ENCODE measurements at regions of chr5 and their contacts with region 1.

Region 1: GRCh38 chr5:140639148-140639979 is at the start of gene TMCO6:
- DNase-seq: peak; percentile 99
- H3K4me3 Mint-ChIP-seq: peak within 1 kb of the TSS; percentile 82
- H3K27ac Mint-ChIP-seq: peak within 1 kb of the TSS; percentile 92
- H3K4me1 Mint-ChIP-seq: peaks cover 41% of the 10 kb centered on the region
- H3K27me3 Mint-ChIP-seq: no peaks in the 10 kb centered on the region
- total RNA-seq, gene TMCO6: 29.0 to 29.5 TPM

Region 2: DNA sequence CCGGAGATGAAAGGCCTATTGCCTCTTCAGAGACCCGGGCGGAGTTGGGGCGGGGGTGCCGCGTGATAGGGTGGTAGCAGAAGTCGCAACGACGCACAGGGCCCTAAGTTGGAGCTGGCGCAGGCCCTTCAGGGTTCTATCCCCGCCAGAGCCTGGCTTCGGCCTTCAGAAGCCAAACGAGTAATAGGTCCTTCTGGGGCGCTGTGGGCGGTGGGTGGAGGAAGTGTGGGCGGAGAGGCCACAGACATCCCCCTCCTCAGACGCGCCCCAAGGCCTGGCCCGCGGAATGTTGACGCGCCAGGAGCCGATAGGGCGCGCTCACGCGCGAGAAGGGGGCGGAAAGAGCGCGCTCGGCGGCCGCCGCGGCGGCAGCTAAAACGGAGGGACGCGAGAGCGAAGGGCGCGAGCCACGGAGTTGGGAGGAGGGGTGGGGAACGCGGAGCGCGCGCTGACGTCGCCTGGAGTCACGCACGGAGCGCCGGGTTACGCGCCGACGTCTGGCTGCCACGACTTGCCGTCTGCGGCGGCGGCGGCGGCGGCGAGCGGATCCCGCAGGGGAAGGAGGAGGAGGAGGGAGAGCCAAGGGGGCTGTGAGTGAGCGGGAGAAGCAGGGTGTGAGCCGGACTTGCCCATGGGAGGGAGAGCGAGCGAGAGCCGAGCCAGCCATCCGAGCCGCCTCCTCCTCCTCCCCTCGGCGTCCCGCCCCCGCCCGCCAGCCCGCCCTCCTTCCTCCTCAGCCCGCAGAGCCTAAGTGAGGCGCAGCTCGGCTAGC is 531.9 kb before region 1 on chr5:
- CTCF ChIA-PET with region 1: no interaction called
- intact Hi-C with region 1: loop called (anchors 5 kb)
- DNase-seq: peak; percentile 91
- H3K4me3 Mint-ChIP-seq: peak overlapping the region; percentile 98
- H3K27ac Mint-ChIP-seq: peak overlapping the region; percentile 91
- H3K4me1 Mint-ChIP-seq: peaks cover 39% of the 10 kb centered on the region
- H3K27me3 Mint-ChIP-seq: no peaks in the 10 kb centered on the region

Region 3: DNA sequence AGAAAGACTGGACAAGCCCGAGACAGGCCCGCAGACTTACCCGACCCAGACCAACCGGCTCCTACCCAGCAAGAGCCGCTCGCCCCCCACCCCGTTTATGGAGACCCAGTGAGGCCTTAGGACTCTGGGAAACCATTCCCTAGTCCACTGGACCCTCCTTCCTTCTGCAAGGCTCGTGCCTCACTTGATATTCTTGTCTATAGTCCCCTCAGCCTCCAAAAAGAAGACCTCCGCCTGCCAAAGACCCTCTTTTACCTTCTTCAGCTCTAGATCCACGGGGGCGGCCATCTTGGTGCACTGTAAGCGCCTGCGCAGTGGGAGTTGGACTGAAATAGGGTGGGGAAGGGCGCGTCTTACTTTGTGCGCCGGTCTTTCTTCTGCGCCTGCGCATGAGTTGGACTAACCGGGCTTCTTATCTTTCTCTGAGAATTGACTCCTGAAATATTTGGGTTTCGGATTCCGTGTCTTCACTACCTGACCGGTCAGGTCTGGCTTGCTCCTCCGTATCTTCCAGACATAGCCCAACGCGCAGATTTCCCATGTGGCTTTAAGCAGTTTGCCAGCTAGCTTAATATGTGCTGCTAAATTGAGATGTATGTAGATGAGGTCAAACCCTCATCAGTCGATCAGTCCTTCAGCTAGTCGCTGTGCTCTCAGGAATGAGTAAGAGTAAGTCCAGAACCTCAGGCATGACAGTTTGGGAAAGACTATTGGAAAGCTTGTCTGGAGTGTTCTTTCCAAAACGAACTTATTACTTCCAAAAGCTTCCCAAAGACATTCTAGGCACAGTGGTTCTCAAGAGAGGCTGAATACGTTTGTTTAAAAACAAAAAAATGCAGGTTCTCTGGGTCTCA is 336.4 kb before region 1 on chr5 and contains the start of gene PFDN1:
- CTCF ChIA-PET with region 1: no interaction called
- intact Hi-C with region 1: loop called (anchors 1 kb)
- DNase-seq: peak; percentile 95
- H3K4me3 Mint-ChIP-seq: peak within 1 kb of the TSS; percentile 99
- H3K27ac Mint-ChIP-seq: peak within 1 kb of the TSS; percentile 91
- H3K4me1 Mint-ChIP-seq: peaks cover 20% of the 10 kb centered on the region
- H3K27me3 Mint-ChIP-seq: no peaks in the 10 kb centered on the region
- total RNA-seq, gene PFDN1: 50.6 to 57.1 TPM

Region 4: DNA sequence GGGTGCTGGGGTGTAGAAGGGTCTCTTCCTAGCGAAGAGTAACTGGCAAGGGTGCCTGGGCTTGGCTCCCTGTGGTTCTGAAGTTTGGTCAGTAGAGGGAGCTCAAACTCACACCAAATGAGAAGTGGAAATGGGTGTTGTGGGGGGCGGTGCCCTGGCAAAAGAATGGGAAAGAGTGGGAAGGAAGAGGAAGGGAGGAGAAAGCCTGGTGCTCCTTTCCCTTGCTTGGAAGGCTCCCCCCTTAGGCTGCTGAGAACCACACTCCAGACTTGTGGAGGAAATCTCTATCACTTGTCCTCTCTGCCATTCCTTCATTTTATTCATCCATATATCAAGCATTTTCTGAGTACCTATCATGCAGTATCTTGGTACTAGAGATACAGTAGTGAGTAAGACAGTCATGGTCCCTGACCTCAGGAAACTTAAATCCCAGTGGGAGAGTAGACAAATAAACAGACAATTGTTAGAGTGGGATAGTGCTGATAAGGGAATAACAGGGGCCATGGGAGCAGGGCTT is 266.3 kb before region 1 on chr5:
- CTCF ChIA-PET with region 1: interaction called, 26 read pairs
- intact Hi-C with region 1: loop called (anchors 1 kb)
- DNase-seq: peak; percentile 58
- H3K4me3 Mint-ChIP-seq: no peak overlapping the region
- H3K27ac Mint-ChIP-seq: no peak overlapping the region
- H3K4me1 Mint-ChIP-seq: peaks cover 2% of the 10 kb centered on the region
- H3K27me3 Mint-ChIP-seq: no peaks in the 10 kb centered on the region

Region 5: GRCh38 chr5:140557136-140557805 is 82.1 kb before region 1 on chr5 and contains the start of gene SRA1:
- CTCF ChIA-PET with region 1: interaction called, 4 read pairs
- intact Hi-C with region 1: loop called (anchors 1 kb)
- DNase-seq: peak; percentile 92
- H3K4me3 Mint-ChIP-seq: peak within 1 kb of the TSS; percentile 79
- H3K27ac Mint-ChIP-seq: peak within 1 kb of the TSS; percentile 93
- H3K4me1 Mint-ChIP-seq: peaks cover 46% of the 10 kb centered on the region
- H3K27me3 Mint-ChIP-seq: no peaks in the 10 kb centered on the region
- total RNA-seq, gene SRA1: 38.0 to 39.6 TPM

Region 6: DNA sequence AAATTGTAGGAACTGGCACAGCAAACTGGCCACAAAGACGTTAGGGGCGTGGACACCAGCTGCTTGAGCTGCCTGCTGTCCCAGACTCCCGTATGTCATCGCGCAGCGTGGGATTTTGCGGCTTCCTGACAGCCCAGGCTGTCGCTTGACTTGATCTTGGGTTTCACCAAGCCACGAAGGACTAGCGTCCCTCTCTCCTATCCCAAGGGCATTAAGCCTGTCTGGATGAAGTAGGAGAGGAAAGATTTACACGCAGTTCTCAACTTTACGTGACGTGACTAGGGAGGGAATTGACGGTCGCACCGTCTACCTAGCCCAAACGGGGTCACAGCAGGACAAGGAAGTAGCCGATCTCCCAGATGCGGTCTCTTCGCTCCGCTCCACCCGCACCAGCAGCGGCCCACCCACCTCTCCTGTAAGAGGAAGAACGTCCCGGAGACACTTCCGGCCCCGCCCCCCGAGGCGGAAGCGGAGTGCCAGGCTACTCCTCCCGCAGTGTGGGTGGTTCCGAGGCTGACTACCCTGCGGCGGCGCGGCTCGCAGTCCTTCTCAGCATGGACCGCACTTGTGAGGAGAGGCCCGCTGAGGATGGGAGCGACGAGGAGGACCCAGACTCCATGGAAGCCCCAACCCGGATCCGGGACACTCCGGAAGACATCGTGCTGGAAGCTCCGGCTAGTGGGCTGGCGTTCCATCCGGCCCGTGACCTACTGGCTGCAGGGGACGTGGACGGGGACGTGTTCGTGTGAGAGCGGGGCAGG is 25.2 kb after region 1 on chr5 and contains the start of gene WDR55:
- CTCF ChIA-PET with region 1: no interaction called
- intact Hi-C with region 1: loop called (anchors 1 kb)
- DNase-seq: peak; percentile 97
- H3K4me3 Mint-ChIP-seq: peak within 1 kb of the TSS; percentile 97
- H3K27ac Mint-ChIP-seq: peak within 1 kb of the TSS; percentile 91
- H3K4me1 Mint-ChIP-seq: peaks cover 33% of the 10 kb centered on the region
- H3K27me3 Mint-ChIP-seq: no peaks in the 10 kb centered on the region
- total RNA-seq, gene WDR55: 18.9 to 19.8 TPM

Region 7: GRCh38 chr5:140700177-140701144 is 61.1 kb after region 1 on chr5 and contains the start of gene ZMAT2:
- CTCF ChIA-PET with region 1: no interaction called
- intact Hi-C with region 1: loop called (anchors 1 kb)
- DNase-seq: peak; percentile 97
- H3K4me3 Mint-ChIP-seq: peak within 1 kb of the TSS; percentile 97
- H3K27ac Mint-ChIP-seq: peak within 1 kb of the TSS; percentile 87
- H3K4me1 Mint-ChIP-seq: peaks cover 24% of the 10 kb centered on the region
- H3K27me3 Mint-ChIP-seq: no peaks in the 10 kb centered on the region
- total RNA-seq, gene ZMAT2: 52.9 to 58.8 TPM

Region 8: GRCh38 chr5:140806834-140807775 is 167.7 kb after region 1 on chr5 and contains the start of gene PCDHA4:
- CTCF ChIA-PET with region 1: no interaction called
- intact Hi-C with region 1: no loop called
- DNase-seq: peak; percentile 31
- H3K4me3 Mint-ChIP-seq: no peak within 1 kb of the TSS
- H3K27ac Mint-ChIP-seq: no peak within 1 kb of the TSS
- H3K4me1 Mint-ChIP-seq: no peaks in the 10 kb centered on the region
- H3K27me3 Mint-ChIP-seq: peaks cover 36% of the 10 kb centered on the region
- total RNA-seq, gene PCDHA4: not detected

Measured in activated naive CD4-positive, alpha-beta T cell treated with anti-CD3 and anti-CD28 coated beads for 36 hours (primary cell).